Naive thymus-derived CD4-positive, alpha-beta T cell (primary cell): ENCODE measurements at regions of chr9 and their contacts with region 1.

Region 1: DNA sequence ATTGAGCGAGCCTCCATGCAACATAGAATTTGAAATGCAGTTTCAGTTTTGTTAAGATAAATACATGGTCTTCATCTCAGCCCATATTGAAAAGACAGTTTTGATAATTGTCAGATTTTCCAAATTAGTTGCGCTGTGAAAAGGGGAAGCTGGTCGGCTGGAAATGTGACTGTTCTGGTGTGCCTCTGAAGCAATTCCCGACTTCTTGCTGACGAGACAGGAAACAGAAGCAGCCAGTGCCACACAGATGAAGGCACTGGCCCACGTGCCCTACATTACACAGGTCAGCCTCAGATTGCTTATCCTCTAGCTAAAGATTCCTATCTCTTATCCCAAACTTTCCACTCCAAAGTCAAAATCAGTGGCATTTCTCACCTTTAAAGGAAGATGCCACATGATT is 214.1 kb upstream of the TLE4 start:
- DNase-seq: no peak
- ATAC-seq: peak; percentile 53
- H3K4me3 ChIP-seq: no peak overlapping the region
- H3K4me3 Mint-ChIP-seq: no peak overlapping the region
- H3K27ac ChIP-seq: no peak overlapping the region
- H3K27ac Mint-ChIP-seq: no peak overlapping the region
- H3K4me1 ChIP-seq: no peaks in the 10 kb centered on the region
- H3K4me1 Mint-ChIP-seq: peaks cover 0 to 7% (median 0%) of the 10 kb centered on the region in 7 donors
- H3K27me3 ChIP-seq: peaks cover 0 to 5% of the 10 kb centered on the region in 2 donors
- H3K27me3 Mint-ChIP-seq: peaks cover 2 to 22% (median 15%) of the 10 kb centered on the region in 5 donors

Region 2: DNA sequence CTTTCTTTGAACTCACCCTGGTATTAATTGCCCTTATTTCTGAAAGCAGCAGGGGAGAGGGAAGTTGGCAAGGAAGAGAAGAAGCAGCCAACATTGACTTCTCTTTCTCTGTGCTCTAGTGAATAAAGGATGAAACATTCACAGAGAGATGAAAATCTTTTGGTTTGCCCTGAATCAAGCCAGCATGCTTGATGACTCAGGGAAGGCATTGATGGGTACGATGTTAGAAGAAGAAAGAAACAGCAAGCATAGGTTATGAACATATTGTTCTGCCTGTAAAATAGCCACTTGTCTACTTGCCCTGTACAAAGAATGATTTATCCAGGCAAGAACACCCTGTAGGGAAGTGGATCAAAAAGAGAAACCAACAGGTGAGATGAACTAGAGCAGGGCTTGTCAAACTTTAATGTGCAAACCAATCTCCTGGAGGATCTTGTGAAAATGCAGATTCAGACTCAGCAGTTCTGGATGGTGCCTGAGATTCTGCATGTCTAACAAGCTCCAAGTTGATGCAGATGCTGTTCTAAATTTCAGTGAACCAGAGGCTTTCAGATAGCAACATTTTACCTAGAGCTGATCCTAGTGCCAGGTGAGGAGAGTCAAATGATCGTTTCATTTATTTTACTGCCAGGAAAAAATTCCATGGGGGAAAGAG is 372.4 kb before region 1 on chr9:
- CTCF ChIA-PET with region 1: no interaction called
- POLR2A ChIA-PET with region 1: no interaction called
- intact Hi-C with region 1: no loop called
- DNase-seq: no peak
- ATAC-seq: no peak
- H3K4me3 ChIP-seq: no peak overlapping the region
- H3K4me3 Mint-ChIP-seq: no peak overlapping the region
- H3K27ac ChIP-seq: no peak overlapping the region
- H3K27ac Mint-ChIP-seq: no peak overlapping the region
- H3K4me1 ChIP-seq: no peaks in the 10 kb centered on the region
- H3K4me1 Mint-ChIP-seq: no peaks in the 10 kb centered on the region
- H3K27me3 ChIP-seq: no peaks in the 10 kb centered on the region
- H3K27me3 Mint-ChIP-seq: no peaks in the 10 kb centered on the region

Region 3: GRCh38 chr9:79334711-79335110 is 22.9 kb before region 1 on chr9:
- CTCF ChIA-PET with region 1: no interaction called
- POLR2A ChIA-PET with region 1: no interaction called
- intact Hi-C with region 1: no loop called
- DNase-seq: no peak
- ATAC-seq: no peak
- H3K4me3 ChIP-seq: no peak overlapping the region
- H3K4me3 Mint-ChIP-seq: no peak overlapping the region
- H3K27ac ChIP-seq: no peak overlapping the region
- H3K27ac Mint-ChIP-seq: no peak overlapping the region
- H3K4me1 ChIP-seq: no peaks in the 10 kb centered on the region
- H3K4me1 Mint-ChIP-seq: no peaks in the 10 kb centered on the region
- H3K27me3 ChIP-seq: no peaks in the 10 kb centered on the region
- H3K27me3 Mint-ChIP-seq: peaks cover 0 to 13% (median 0%) of the 10 kb centered on the region in 5 donors

Region 4: GRCh38 chr9:79408617-79409016 is 51.0 kb after region 1 on chr9:
- CTCF ChIA-PET with region 1: no interaction called
- POLR2A ChIA-PET with region 1: no interaction called
- intact Hi-C with region 1: loop called in 1 of 2 experiments (anchors 10 kb)
- DNase-seq: no peak
- ATAC-seq: no peak
- H3K4me3 ChIP-seq: no peak overlapping the region
- H3K4me3 Mint-ChIP-seq: no peak overlapping the region
- H3K27ac ChIP-seq: no peak overlapping the region
- H3K27ac Mint-ChIP-seq: no peak overlapping the region
- H3K4me1 ChIP-seq: no peaks in the 10 kb centered on the region
- H3K4me1 Mint-ChIP-seq: no peaks in the 10 kb centered on the region
- H3K27me3 ChIP-seq: no peaks in the 10 kb centered on the region
- H3K27me3 Mint-ChIP-seq: peaks cover 0 to 6% (median 0%) of the 10 kb centered on the region in 5 donors